ENCODE measurements at regions of chr6 and their contacts with region 1.

Region 1: GRCh38 chr6:90458353-90459224 is 128.3 kb downstream of the MAP3K7 start:
- DNase-seq: no peak
- CTCF ChIP-seq: no peak

Region 2: DNA sequence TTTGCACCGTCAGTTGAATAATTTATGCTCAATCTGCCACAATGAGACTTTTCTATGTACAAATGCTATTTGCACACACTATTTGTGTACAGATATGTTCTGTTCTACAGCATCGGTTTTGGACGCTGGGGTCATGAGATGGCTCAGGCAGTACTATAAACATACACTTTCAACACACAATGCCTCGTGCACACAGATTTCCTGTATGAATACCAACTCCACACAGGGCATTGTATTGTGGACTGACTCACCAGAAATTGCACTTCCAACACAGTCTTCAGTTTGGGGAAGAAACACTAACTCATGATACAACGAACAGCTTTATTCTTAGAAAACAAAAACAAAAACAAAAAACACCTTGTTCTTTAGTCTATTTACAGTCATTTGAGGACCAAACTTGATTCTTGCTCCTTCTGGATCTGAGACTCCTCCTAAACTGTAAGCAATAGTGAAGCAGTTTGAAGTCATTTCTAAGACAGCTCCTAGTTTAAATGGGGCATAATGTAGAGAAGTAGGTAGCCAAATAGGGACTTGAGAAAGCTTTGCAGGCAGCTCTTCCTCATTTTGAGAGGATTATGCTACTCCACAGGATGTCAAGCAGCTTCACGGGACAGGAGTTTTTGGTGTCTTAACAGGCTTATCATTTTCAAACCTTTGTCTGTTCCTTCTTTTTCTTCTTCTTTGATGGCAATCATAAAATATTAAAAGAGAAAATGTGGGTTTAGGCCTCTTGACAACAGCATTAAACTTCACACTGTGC is 530.6 kb before region 1 on chr6:
- CTCF ChIA-PET with region 1: no interaction called
- POLR2A ChIA-PET with region 1: no interaction called
- DNase-seq: no peak
- CTCF ChIP-seq: no peak

Region 3: GRCh38 chr6:90434094-90434493 is 24.5 kb before region 1 on chr6:
- CTCF ChIA-PET with region 1: interaction called, 14 read pairs
- POLR2A ChIA-PET with region 1: no interaction called
- DNase-seq: no peak
- CTCF ChIP-seq: no peak

Region 4: DNA sequence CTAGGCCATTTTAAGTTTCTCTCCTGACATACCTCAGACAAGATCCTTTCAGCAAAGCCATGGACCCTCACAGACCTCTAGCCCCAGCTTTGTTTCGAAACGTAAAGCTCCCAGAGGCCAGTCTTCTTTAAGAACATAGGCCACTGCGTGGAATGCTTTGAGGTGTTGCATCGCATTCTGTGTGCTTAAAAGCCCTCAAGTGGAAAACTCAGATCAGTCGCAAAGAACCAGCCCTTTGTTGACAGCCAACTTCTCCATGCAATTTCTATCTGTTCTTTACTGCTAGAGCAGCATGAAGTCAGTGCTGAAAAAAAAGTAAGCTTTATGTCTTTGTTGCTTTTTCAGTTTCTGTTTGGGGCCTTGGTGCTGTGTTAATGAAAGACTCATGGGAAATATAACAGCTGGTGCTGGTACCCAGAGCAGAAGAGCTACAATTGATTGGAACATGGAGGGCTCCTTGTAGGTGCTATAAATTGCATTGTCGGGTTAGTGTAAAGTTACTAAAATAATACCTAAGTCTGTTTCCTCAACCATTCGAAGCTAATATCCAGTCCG is 14.4 kb before region 1 on chr6:
- CTCF ChIA-PET with region 1: interaction called, 23 read pairs
- POLR2A ChIA-PET with region 1: no interaction called
- DNase-seq: no peak
- CTCF ChIP-seq: no peak